ENCODE measurements at regions of chr17 and their contacts with region 1.

Region 1: DNA sequence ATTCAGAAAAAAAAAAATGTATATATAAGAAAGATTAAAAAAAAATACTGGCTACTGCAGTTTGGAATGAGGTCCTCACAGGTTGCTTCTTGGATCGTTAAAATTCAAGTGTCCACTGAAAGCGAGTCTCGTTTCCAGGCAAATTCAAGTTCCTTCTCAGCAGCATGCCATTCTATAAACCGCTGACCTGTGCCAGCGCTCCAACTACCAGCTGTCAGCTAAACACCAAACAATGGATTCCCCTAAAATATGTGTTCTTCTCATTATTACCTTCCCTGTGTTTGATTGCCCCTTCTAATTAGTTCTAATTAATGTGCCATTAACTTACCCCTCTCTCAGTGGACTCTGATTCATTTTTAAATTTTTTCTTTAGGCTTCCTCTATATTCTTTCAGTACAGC is 92.4 kb downstream of the DNAH9 start:
- DNase-seq: no peak
- H3K4me3 ChIP-seq: no peak overlapping the region
- H3K27ac ChIP-seq: no peak overlapping the region
- H3K4me1 ChIP-seq: no peaks in the 10 kb centered on the region
- CTCF ChIP-seq: no peak

Region 2: GRCh38 chr17:11757815-11758214 is 67.1 kb after region 1 on chr17:
- CTCF ChIA-PET with region 1: no interaction called
- POLR2A ChIA-PET with region 1: no interaction called
- intact Hi-C with region 1: loop called (anchors 10 kb)
- DNase-seq: no peak
- H3K4me3 ChIP-seq: no peak overlapping the region
- H3K27ac ChIP-seq: no peak overlapping the region
- H3K4me1 ChIP-seq: no peaks in the 10 kb centered on the region
- CTCF ChIP-seq: no peak

Measured in OCI-LY7 (cell line).